H1 (cell line): ENCODE measurements at regions of chr14 and their contacts with region 1.

Region 1: GRCh38 chr14:70707138-70708038 is 65.7 kb downstream of the TTC9 start:
- DNase-seq: no peak
- H3K4me3 ChIP-seq: no peak overlapping the region; a peak in 1 of 8 replicates
- H3K27ac ChIP-seq: peak overlapping the region; percentile 48; the same call in 1 of the 2 replicates
- H3K4me1 ChIP-seq: peaks cover 20 to 33% (median 31%) of the 10 kb centered on the region in 4 experiments
- H3K27me3 ChIP-seq: no peaks in the 10 kb centered on the region
- CTCF ChIP-seq: peak in 2 of 3 experiments; percentile 39 to 43; a peak in 2 of 4 replicates
- EP300 ChIP-seq: no peak
- POLR2A ChIP-seq: no peak
- RAD21 ChIP-seq: peak in 1 of 2 experiments; percentile 29; a peak in 1 of 4 replicates

Region 2: DNA sequence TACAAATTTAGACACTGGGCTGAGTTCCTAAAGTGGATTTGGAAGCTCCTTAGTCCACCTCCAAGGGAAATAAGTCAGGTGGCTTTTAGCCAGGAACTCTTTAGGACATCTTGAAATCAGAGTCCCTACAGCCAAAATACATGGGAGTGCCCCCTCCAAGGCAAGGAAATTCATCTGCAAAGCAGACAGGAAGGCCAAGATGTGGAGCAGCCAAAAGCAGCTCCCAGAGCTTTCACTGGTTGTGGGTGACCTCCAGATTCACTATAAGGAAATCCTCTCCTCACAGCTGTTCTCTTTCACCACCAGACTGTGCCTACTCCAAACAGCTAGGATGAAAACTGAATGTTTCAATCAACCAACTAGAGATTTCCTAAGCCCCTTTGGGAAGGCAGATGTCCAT is 59.0 kb before region 1 on chr14:
- CTCF ChIA-PET with region 1: interaction called, 4 read pairs
- POLR2A ChIA-PET with region 1: interaction called, 14 read pairs
- DNase-seq: peak in 1 of 2 experiments; percentile 16
- H3K4me3 ChIP-seq: no peak overlapping the region
- H3K27ac ChIP-seq: no peak overlapping the region
- H3K4me1 ChIP-seq: peaks cover 26 to 54% (median 41%) of the 10 kb centered on the region in 4 experiments; a peak in 6 of 7 replicates
- H3K27me3 ChIP-seq: no peaks in the 10 kb centered on the region
- CTCF ChIP-seq: no peak
- EP300 ChIP-seq: no peak
- POLR2A ChIP-seq: no peak
- RAD21 ChIP-seq: no peak

Region 3: DNA sequence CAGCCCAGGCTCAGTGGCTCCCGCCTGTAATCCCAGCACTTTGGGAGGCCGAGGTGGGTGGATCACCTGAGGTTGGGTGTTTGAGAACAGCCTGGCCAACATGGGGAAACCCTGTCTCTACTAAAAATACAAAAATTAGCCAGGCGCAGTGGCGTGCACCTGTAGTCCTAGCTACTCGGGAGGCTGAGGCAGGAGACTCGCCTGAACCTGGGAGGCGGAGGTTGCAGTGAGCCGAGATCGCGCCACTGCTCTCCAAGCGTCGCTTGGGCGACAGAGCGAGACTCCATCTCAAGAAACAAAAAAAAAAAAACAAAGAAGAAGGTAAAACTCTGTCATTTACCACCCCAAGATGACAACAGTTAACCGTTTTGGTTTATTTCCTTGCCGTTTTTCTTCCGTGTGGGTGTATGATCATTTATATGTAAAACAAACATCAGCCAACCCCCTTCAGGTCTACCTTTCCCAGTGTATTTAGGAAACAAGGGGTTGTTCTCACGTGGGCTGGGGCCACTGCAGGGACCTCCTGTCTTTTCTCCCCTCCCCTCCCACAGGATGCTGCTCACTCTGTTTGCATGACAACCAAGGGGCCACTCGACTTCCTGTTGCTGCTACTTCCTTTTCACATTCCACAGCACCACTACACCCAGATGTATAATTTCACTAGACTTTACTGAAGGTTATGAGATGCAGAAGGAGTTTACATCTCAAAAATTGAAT is 52.1 kb before region 1 on chr14:
- CTCF ChIA-PET with region 1: interaction called, 3 read pairs
- POLR2A ChIA-PET with region 1: interaction called, 15 read pairs
- DNase-seq: peak in 1 of 2 experiments; percentile 53
- H3K4me3 ChIP-seq: peak overlapping the region in 1 of 4 experiments; percentile 32; a peak in 1 of 8 replicates
- H3K27ac ChIP-seq: peak overlapping the region; percentile 65
- H3K4me1 ChIP-seq: peaks cover 7 to 39% (median 33%) of the 10 kb centered on the region in 4 experiments
- H3K27me3 ChIP-seq: no peaks in the 10 kb centered on the region
- CTCF ChIP-seq: no peak
- EP300 ChIP-seq: no peak; a peak in 1 of 3 replicates
- POLR2A ChIP-seq: no peak
- RAD21 ChIP-seq: no peak

Region 4: DNA sequence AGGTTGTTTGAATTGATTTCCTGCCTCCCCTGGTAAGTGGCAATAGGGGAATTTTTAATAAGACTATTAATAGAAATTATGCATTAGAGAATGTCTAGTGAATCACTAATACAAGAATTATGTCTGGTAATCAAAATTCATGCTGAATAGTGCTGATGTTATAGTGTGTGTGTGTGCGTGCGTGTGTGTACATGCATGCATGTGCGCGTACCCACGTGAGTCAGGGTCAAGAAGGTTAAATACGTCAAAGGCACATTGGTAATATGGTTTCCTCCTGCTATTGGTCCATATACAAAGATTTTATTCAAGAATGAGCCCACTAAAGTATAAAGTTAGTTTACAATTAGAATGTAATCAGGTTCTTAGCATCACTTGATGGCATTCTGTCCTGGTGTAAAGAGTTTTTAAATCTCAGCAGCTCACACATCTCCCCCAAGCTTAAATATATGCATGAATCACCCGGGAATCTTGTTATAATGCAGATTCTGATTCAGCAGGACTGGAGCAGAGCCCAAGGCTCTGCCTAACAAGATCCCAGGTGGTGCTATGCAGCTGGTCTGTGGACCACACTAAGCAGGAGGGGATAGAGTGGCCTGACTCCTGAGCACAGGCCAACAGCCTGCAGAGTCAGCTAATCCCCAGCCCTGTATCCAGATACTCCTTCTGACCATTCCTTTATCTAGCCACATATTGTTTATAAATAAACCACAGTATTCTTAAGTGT is 21.8 kb before region 1 on chr14:
- CTCF ChIA-PET with region 1: interaction called, 11 read pairs
- POLR2A ChIA-PET with region 1: interaction called, 25 read pairs
- DNase-seq: no peak
- H3K4me3 ChIP-seq: peak overlapping the region in 1 of 4 experiments; percentile 6; a peak in 1 of 8 replicates
- H3K27ac ChIP-seq: no peak overlapping the region
- H3K4me1 ChIP-seq: peaks cover 2 to 13% (median 9%) of the 10 kb centered on the region in 4 experiments; a peak in 6 of 7 replicates
- H3K27me3 ChIP-seq: no peaks in the 10 kb centered on the region
- CTCF ChIP-seq: no peak
- EP300 ChIP-seq: no peak
- POLR2A ChIP-seq: no peak
- RAD21 ChIP-seq: peak; percentile 6 to 34; a peak in 1 of 4 replicates

Region 5: DNA sequence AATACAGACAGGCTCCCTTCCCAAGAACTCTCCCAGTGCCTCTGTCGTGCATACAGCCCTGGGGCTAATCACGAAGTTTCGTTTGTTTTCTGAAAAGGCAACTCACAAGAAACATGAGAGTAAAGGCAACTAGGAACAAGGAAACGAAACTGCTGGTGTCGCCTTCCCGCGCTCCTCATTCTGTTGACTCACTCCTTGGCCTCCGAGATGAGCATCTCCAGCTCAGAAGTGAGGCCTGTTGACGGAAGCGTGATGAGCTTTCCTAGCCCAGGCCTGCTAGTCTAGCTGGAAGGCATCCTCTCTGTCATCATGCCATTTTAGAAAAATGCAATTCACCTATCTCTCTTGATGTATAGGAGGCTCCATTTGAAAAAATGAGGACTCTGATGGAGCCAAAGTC is 15.2 kb before region 1 on chr14:
- CTCF ChIA-PET with region 1: interaction called, 12 read pairs
- POLR2A ChIA-PET with region 1: interaction called, 43 read pairs
- DNase-seq: no peak
- H3K4me3 ChIP-seq: no peak overlapping the region
- H3K27ac ChIP-seq: no peak overlapping the region
- H3K4me1 ChIP-seq: peaks cover 0 to 6% (median 0%) of the 10 kb centered on the region in 4 experiments; a peak in 1 of 7 replicates
- H3K27me3 ChIP-seq: no peaks in the 10 kb centered on the region
- CTCF ChIP-seq: no peak
- EP300 ChIP-seq: no peak
- POLR2A ChIP-seq: no peak
- RAD21 ChIP-seq: no peak

Region 6: DNA sequence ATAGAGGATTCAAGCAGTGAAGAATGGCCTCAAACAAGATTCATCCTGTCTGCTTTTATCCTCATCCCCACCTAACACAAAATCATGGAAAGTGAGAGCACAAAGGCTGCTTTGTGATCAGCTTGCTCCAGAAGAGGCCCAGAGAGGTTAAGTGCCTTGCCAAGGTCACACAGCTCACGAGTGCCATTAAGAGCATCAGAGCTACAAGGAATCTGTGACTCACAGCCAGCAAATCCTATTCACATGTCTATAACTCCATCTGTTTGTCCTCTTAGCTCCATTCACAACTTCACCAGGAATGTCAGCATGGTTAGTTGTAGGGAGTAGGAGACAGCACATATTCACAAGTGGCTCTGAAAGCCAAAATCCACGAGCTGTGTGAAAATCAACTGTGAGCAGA is 14.2 kb after region 1 on chr14:
- CTCF ChIA-PET with region 1: interaction called, 33 read pairs
- POLR2A ChIA-PET with region 1: interaction called, 21 read pairs
- DNase-seq: no peak
- H3K4me3 ChIP-seq: no peak overlapping the region
- H3K27ac ChIP-seq: no peak overlapping the region
- H3K4me1 ChIP-seq: 0 out of 7 replicates have a peak, but pooled peaks cover 0 to 2% (median 0%) of the 10 kb centered on the region in 4 experiments
- H3K27me3 ChIP-seq: no peaks in the 10 kb centered on the region
- CTCF ChIP-seq: no peak
- EP300 ChIP-seq: no peak
- POLR2A ChIP-seq: no peak
- RAD21 ChIP-seq: no peak